PC-9 (cell line): ENCODE measurements at regions of chr4 and their contacts with region 1.

Region 1: GRCh38 chr4:8582941-8583569 is 2.9 kb downstream of the GPR78 start:
- DNase-seq: no peak
- H3K4me3 ChIP-seq: no peak overlapping the region
- H3K27ac ChIP-seq: no peak overlapping the region
- H3K4me1 ChIP-seq: no peaks in the 10 kb centered on the region
- H3K27me3 ChIP-seq: no peaks in the 10 kb centered on the region
- CTCF ChIP-seq: no peak

Region 2: GRCh38 chr4:8015512-8015911 is 567.5 kb before region 1 on chr4:
- CTCF ChIA-PET with region 1: no interaction called
- POLR2A ChIA-PET with region 1: interaction called, 10 read pairs
- intact Hi-C with region 1: no loop called
- DNase-seq: no peak
- H3K4me3 ChIP-seq: no peak overlapping the region
- H3K27ac ChIP-seq: no peak overlapping the region
- H3K4me1 ChIP-seq: peaks cover 9% of the 10 kb centered on the region; the same call in 1 of the 2 replicates
- H3K27me3 ChIP-seq: no peaks in the 10 kb centered on the region
- CTCF ChIP-seq: peak; percentile 51

Region 3: DNA sequence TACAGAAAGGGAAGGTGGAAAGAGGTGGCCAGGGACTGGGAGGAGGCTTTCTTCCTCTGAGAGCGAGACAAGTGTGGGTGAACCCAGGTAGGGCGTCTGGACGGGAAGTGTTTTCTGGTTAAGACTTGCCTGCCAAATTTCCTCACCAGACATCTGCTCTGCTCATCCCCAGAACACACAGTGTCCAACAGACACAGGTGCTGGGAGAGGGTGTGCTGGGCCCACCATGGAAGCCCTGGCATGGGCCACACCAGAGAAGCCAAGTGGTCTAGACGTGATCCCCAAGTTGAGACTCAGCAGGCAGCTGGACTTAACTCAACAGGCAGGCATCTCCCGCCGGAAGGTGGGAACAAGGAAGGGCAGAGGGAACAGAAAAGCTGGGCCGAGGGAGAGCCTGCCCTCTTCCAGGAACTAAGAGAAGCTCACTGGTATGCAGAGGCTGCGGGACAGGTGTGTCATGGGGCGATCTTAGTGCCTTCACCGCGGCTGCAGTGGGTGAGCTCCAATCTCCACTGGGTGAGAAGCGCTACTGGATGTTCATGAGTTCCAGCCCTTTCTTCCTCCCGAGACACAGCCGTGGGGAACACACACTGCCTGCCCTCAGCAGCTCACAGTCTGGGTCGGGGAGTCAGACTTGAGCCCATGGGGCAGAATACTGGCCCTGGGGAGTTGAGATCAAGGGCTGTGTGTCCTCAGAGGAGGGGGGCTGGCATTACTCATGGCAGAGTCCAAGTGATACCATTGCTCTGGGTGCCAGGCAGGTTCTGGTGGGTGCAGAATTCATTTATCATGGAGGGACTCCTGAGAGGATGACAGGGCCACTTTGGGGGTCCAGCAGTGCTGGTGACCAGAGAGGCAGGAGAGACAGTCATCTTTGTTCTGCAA is 119.7 kb after region 1 on chr4:
- CTCF ChIA-PET with region 1: no interaction called
- POLR2A ChIA-PET with region 1: no interaction called
- intact Hi-C with region 1: no loop called
- DNase-seq: no peak
- H3K4me3 ChIP-seq: no peak overlapping the region
- H3K27ac ChIP-seq: no peak overlapping the region
- H3K4me1 ChIP-seq: no peaks in the 10 kb centered on the region
- H3K27me3 ChIP-seq: peaks cover 99% of the 10 kb centered on the region
- CTCF ChIP-seq: no peak